ENCODE measurements at regions of chr16 and their contacts with region 1.

Region 1: DNA sequence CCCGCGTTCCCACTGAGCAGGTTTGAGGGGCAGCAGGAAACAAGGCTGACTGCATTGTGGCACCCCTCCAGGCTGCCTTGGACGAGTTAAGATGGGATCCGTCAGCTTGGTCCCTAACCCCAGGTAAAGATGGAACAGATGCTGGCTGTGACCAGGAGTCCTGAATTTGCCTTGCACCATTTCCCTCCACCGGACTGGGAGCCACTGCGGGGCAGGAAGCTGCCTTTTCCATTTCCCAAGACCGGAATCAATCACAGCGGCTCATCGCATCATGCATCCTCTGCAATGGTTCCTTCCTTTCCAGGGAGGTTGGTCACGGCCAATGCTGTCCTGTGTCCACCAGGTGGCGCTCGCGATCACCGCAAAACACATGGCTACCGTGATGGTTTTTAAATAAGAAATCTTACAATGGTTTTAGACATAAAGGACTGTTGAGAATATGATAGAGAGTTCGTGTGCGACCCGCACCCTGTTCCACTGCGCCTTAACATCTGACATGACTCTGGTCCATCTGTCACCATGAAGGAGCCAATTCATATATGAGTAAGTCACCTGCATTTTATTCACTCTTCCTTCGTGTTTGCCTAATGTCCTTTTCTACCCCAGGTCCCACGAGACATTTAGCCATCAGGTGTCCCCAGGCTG is 6.8 kb upstream of the MEAK7 start:
- DNase-seq: peak; percentile 89
- ATAC-seq: no peak
- H3K4me3 Mint-ChIP-seq: peak overlapping the region; percentile 55
- H3K27ac Mint-ChIP-seq: peak overlapping the region; percentile 88
- H3K4me1 Mint-ChIP-seq: peaks cover 91% of the 10 kb centered on the region
- H3K27me3 Mint-ChIP-seq: no peaks in the 10 kb centered on the region

Region 2: DNA sequence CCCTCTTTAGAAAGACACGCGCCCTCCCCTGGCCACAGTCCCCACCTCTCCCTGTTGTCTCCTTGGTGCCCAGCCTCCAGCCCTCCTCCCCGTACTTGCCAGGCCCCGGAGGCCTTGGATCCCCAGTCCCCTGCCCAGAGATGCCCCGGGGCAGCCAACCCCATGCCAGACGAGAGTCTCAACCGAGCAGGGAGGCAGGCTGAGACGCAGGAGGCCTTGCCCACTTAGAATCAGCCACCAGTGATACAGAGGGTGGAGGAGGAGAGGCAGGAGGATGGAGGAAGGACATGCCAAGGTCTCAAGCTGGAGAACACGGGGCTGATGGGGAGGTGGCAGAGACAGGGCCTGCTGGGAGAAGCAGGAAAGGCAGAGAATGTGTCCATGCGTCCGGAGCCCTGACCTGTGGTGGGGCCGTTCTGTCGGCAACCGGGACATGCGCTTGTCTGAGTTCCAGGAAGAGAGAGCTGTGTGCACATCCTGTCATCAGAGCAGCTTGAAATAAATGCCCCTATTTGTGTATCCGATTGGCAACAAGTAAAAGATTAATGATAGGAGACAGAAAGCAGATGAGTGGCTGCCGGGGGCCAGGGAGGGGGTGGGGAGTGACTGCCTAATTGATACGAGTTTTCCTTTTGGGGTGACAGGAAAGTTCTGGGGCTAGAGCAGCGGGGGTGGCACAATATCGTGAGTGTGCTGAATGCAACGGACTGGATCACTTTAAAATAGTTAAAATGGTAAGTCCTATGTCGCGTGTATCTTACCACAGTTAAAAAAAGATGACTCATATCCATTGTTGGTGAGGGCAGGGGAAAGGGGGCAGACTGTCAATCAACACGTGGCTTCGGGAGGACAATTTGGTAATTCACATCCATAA is 37.9 kb after region 1 on chr16:
- CTCF ChIA-PET with region 1: interaction called, 172 read pairs
- POLR2A ChIA-PET with region 1: interaction called, 26 read pairs
- DNase-seq: peak; percentile 75
- ATAC-seq: peak; percentile 54
- H3K4me3 Mint-ChIP-seq: peak overlapping the region; percentile 86
- H3K27ac Mint-ChIP-seq: peak overlapping the region; percentile 98
- H3K4me1 Mint-ChIP-seq: peaks cover 52% of the 10 kb centered on the region
- H3K27me3 Mint-ChIP-seq: no peaks in the 10 kb centered on the region

Region 3: DNA sequence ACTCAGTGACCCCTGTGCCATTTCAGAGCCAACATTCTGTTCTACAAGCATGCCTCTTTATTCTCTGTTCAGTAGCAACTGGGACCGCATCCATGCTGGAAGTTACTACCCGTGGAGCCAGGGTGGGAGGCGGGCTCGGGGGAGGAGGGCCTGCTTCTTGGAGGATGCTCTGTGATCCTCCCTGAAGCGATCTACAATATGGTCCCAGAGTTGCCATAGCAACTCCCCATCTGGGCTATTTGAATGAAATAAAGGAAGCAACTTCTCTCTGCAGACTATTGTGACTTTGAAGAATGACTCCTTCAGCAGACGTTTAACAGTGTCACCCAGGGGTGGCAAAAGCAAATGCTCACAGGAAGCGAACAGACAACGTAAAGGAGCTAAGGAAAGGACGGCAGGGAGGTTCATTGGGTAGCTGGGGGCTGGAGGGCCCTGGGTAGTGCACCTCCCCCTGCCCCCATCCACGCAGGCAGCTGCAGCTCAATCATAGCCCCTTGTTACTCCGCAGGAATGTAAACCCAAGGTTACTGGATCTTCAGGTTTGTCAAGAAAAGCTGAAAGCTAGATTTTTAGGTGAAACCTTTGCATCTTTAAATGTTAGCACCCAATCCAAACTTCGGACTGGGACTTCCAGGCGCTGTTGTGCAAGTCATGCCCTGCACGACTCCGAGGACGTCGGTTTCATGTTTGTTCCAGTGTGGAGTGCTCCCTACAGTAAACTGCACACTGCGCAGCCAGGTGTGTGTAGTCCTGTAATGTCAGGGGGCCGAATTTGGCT is 44.3 kb after region 1 on chr16:
- CTCF ChIA-PET with region 1: interaction called, 172 read pairs
- POLR2A ChIA-PET with region 1: interaction called, 26 read pairs
- DNase-seq: no peak
- ATAC-seq: no peak
- H3K4me3 Mint-ChIP-seq: no peak overlapping the region
- H3K27ac Mint-ChIP-seq: peak overlapping the region; percentile 53
- H3K4me1 Mint-ChIP-seq: peaks cover 35% of the 10 kb centered on the region
- H3K27me3 Mint-ChIP-seq: no peaks in the 10 kb centered on the region

Region 4: DNA sequence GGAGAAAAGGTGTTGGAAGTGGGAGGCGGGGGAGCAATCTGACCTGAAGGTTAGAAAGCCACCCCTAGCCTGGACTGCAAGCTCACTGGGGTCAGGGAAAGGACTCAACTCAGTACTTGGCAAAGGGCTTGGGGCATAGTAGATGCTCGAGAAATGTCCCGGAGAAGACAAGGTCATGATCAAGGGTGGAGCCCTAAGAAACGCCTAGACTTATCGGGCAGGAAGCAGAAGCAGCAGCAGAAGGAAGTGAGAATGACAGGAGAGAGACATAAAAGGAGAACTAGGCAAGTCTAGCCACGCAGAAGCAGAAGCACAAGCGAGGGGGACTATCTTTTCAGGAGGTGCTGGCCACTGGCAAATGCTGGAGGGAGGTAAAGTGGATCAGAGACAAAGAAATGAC is 96.4 kb after region 1 on chr16:
- CTCF ChIA-PET with region 1: interaction called, 11 read pairs
- POLR2A ChIA-PET with region 1: interaction called, 14 read pairs
- DNase-seq: peak; percentile 56
- ATAC-seq: peak; percentile 52
- H3K4me3 Mint-ChIP-seq: peak overlapping the region; percentile 70
- H3K27ac Mint-ChIP-seq: peak overlapping the region; percentile 92
- H3K4me1 Mint-ChIP-seq: peaks cover 94% of the 10 kb centered on the region
- H3K27me3 Mint-ChIP-seq: no peaks in the 10 kb centered on the region